Aorta (tissue), 5 donors: ENCODE measurements at regions of chr20 and their contacts with region 1.

Region 1: GRCh38 chr20:4326195-4327065 is 311.1 kb upstream of the RNF24 start:
- DNase-seq: no peak
- ATAC-seq: no peak
- H3K4me3 ChIP-seq: no peak overlapping the region
- H3K27ac ChIP-seq: peak overlapping the region in 1 of 2 donors; percentile 4
- H3K4me1 ChIP-seq: peaks cover 3 to 6% of the 10 kb centered on the region in 2 donors
- H3K27me3 ChIP-seq: no peaks in the 10 kb centered on the region

Region 2: DNA sequence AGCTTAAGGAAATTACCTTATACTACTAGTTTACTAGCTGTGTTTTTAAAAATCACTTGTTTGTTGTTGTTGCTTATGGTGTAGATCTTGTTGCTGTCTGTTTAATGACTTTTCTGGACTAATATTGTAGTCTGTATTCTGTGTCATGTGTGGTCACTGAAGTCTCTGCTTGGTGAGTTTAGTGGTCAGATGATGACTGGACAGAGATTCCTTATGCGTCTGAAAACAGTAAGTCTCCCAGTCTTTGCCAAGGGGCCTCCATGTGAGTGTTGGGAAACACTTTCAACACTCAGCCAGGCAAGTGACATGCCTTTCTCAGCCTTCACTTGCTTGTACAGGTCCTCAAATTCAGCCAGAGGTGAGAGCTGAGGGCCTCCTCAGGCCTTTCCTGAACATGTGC is 54.2 kb before region 1 on chr20:
- intact Hi-C with region 1: loop called in 1 of 2 experiments (anchors 10 kb)
- DNase-seq: no peak
- ATAC-seq: no peak
- H3K4me3 ChIP-seq: no peak overlapping the region
- H3K27ac ChIP-seq: no peak overlapping the region
- H3K4me1 ChIP-seq: no peaks in the 10 kb centered on the region
- H3K27me3 ChIP-seq: no peaks in the 10 kb centered on the region

Region 3: DNA sequence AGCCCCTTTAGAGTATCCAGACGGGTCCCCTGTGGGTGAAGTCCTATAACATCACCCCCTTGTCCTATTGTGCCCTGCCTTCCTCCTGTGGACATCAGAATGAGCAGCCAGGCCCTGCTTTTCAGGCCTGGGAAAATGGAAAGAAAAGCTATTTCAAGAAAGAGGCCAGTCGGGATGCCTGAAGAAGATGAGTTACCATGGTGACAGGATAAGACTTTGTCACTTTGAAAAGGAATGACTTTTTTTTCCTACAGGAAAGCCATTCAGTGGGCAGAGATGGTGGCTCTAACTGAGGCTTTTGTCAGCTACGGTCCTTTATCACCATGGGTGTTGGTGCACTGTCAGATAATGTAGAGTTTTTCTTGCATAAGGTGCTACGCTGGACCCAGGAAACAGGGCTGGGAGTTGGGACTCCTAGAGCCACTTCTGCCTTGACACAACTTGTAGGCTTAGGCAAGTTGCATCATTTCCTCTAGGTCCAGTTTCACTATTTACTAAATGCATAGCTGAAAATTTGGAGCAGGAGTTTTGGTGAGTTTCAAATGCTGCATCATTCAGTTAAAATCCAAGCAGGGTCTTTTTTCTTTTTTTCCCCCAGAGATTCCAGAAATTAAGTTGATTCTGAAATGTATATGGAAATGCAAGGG is 101.6 kb after region 1 on chr20:
- intact Hi-C with region 1: loop called in 1 of 2 experiments (anchors 10 kb)
- DNase-seq: no peak
- ATAC-seq: no peak
- H3K4me3 ChIP-seq: no peak overlapping the region
- H3K27ac ChIP-seq: no peak overlapping the region
- H3K4me1 ChIP-seq: peaks cover 0 to 2% of the 10 kb centered on the region in 2 donors
- H3K27me3 ChIP-seq: no peaks in the 10 kb centered on the region